Ovary (tissue), 10 donors: ENCODE measurements at regions of chr3 and their contacts with region 1.

Region 1: GRCh38 chr3:58414538-58415197 is 19.0 kb downstream of the PDHB start:
- DNase-seq: peak; percentile 48 to 65 (median 51)
- H3K4me3 ChIP-seq: no peak overlapping the region
- H3K27ac ChIP-seq: no peak overlapping the region
- H3K4me1 ChIP-seq: peaks cover 2% of the 10 kb centered on the region
- H3K27me3 ChIP-seq: no peaks in the 10 kb centered on the region
- CTCF ChIP-seq: peak; percentile 48 to 88 (median 84)
- EP300 ChIP-seq: no peak
- POLR2A ChIP-seq: no peak

Region 2: GRCh38 chr3:58188173-58188564 is 226.5 kb before region 1 on chr3:
- intact Hi-C with region 1: loop called in 1 of 4 experiments (anchors 10 kb)
- DNase-seq: no peak
- H3K4me3 ChIP-seq: no peak overlapping the region
- H3K27ac ChIP-seq: no peak overlapping the region
- H3K4me1 ChIP-seq: no peaks in the 10 kb centered on the region
- H3K27me3 ChIP-seq: no peaks in the 10 kb centered on the region
- CTCF ChIP-seq: no peak
- EP300 ChIP-seq: no peak
- POLR2A ChIP-seq: no peak

Region 3: DNA sequence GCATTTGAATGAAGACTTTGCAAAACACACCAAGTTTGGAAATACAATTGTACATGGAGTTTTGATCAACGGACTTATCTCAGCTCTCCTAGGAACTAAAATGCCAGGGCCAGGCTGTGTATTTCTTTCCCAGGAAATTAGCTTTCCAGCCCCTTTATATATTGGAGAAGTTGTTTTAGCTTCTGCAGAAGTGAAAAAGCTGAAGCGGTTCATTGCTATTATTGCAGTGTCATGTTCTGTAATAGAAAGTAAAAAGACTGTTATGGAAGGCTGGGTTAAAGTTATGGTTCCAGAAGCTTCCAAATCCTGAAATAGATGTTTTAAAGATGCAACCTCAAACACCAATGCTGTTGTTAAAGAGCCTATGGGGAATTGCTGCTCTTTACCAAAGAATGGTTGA is 96.9 kb before region 1 on chr3:
- intact Hi-C with region 1: loop called in 2 of 4 experiments (anchors 5 kb)
- DNase-seq: no peak
- H3K4me3 ChIP-seq: no peak overlapping the region
- H3K27ac ChIP-seq: no peak overlapping the region
- H3K4me1 ChIP-seq: no peaks in the 10 kb centered on the region
- H3K27me3 ChIP-seq: no peaks in the 10 kb centered on the region
- CTCF ChIP-seq: no peak
- EP300 ChIP-seq: no peak
- POLR2A ChIP-seq: no peak

Region 4: GRCh38 chr3:58332575-58333188 is 82.0 kb before region 1 on chr3 and contains the start of gene PXK:
- intact Hi-C with region 1: loop called in 3 of 4 experiments (anchors 2 to 10 kb)
- DNase-seq: peak; percentile 76 to 85 (median 81)
- H3K4me3 ChIP-seq: peak within 1 kb of the TSS; percentile 64
- H3K27ac ChIP-seq: peak within 1 kb of the TSS in 1 of 2 donors; percentile 51
- H3K4me1 ChIP-seq: peaks cover 6% of the 10 kb centered on the region
- H3K27me3 ChIP-seq: no peaks in the 10 kb centered on the region
- CTCF ChIP-seq: peak in 2 of 3 donors; percentile 6 to 42
- EP300 ChIP-seq: no peak
- POLR2A ChIP-seq: peak; percentile 49
- total RNA-seq, gene PXK: 21.6 to 36.6 (median 25.9) TPM

Region 5: GRCh38 chr3:58491506-58492402 is 77.1 kb after region 1 on chr3 and contains the start of gene KCTD6:
- intact Hi-C with region 1: loop called in 1 of 4 experiments (anchors 10 kb)
- DNase-seq: peak; percentile 91 to 97 (median 95)
- H3K4me3 ChIP-seq: peak within 1 kb of the TSS; percentile 77
- H3K27ac ChIP-seq: peak within 1 kb of the TSS; percentile 66 to 71
- H3K4me1 ChIP-seq: peaks cover 12% of the 10 kb centered on the region
- H3K27me3 ChIP-seq: no peaks in the 10 kb centered on the region
- CTCF ChIP-seq: peak; percentile 24 to 79 (median 79)
- EP300 ChIP-seq: no peak
- POLR2A ChIP-seq: no peak
- total RNA-seq, gene KCTD6: 10.9 to 16.6 (median 13.0) TPM